Heart right ventricle (tissue), 16 donors: ENCODE measurements at regions of chr4 and their contacts with region 1.

Region 1: GRCh38 chr4:138177278-138177968 is 64.7 kb downstream of the SLC7A11 start:
- DNase-seq: no peak
- ATAC-seq: no peak
- H3K4me3 ChIP-seq: no peak overlapping the region
- H3K27ac ChIP-seq: no peak overlapping the region
- H3K4me1 ChIP-seq: peaks cover 0 to 24% (median 13%) of the 10 kb centered on the region in 9 donors
- H3K27me3 ChIP-seq: no peaks in the 10 kb centered on the region
- CTCF ChIP-seq: no peak

Region 2: GRCh38 chr4:138095378-138095777 is 82.0 kb before region 1 on chr4:
- intact Hi-C with region 1: loop called in 3 of 10 experiments (anchors 1 to 5 kb)
- DNase-seq: no peak
- ATAC-seq: no peak
- H3K4me3 ChIP-seq: no peak overlapping the region
- H3K27ac ChIP-seq: no peak overlapping the region
- H3K4me1 ChIP-seq: no peaks in the 10 kb centered on the region
- H3K27me3 ChIP-seq: no peaks in the 10 kb centered on the region
- CTCF ChIP-seq: no peak